ENCODE measurements at regions of chr6 and their contacts with region 1.

Region 1: DNA sequence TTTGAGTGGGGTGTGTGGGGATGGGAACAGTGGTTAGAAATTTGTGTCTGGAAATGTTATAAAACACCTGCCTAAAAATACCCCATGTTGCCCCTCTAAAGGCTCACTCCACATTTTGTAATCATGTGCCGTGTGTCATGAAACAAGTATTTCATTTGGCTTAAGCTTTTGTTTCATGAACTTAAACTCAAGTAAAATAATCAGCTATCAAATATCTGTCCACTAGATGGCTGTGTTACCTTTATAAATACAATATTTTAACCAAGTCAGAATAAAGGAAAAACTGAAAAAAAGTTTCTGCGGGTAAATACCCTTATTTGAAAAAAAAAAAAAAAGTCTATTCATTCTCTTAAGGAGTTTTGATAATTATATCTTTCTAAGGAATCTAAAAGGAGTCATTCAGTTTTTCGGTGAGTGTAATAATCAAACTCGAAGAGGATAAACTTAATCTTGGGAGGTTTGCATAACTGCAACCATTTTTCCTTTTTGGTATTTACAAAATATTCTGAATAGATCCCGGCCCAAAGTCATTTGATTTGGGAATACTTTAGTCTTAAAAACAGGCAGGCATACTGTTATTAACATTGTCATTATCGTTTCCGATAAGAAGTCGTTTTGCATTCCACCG is 29.9 kb upstream of the MTRF1L start:
- DNase-seq: no peak
- ATAC-seq: no peak
- H3K4me3 Mint-ChIP-seq: no peak overlapping the region
- H3K27ac Mint-ChIP-seq: no peak overlapping the region
- H3K4me1 Mint-ChIP-seq: peaks cover 28% of the 10 kb centered on the region
- H3K27me3 Mint-ChIP-seq: no peaks in the 10 kb centered on the region
- CTCF ChIP-seq: no peak

Region 2: DNA sequence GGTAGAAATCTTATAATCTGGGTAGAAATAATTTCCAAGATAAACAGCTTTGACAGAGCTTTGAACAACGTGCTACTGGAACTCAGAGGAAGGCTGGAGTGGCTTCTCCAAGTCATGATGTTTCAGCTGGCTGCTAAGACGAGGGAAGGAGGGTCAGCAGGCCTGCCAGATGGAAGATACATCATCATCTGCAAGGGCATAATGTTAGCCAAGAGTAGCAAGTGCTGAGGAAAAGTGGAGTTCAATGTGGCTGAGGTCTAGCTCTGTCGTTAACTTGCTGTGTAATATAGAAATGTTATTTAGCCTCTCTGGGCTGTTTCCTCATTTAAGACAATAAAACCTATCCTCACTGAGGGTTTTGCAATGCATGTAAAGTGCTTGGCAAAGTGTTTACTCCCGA is 63.7 kb after region 1 on chr6:
- CTCF ChIA-PET with region 1: no interaction called
- POLR2A ChIA-PET with region 1: no interaction called
- DNase-seq: no peak
- ATAC-seq: no peak
- H3K4me3 Mint-ChIP-seq: no peak overlapping the region
- H3K27ac Mint-ChIP-seq: peak overlapping the region; percentile 60; the same call in 1 of the 2 replicates
- H3K4me1 Mint-ChIP-seq: no peaks in the 10 kb centered on the region
- H3K27me3 Mint-ChIP-seq: no peaks in the 10 kb centered on the region
- CTCF ChIP-seq: no peak

Region 3: GRCh38 chr6:153108315-153108714 is 75.9 kb after region 1 on chr6:
- CTCF ChIA-PET with region 1: interaction called, 10 read pairs
- POLR2A ChIA-PET with region 1: no interaction called
- DNase-seq: no peak
- ATAC-seq: peak; percentile 62
- H3K4me3 Mint-ChIP-seq: no peak overlapping the region
- H3K27ac Mint-ChIP-seq: no peak overlapping the region
- H3K4me1 Mint-ChIP-seq: peaks cover 48% of the 10 kb centered on the region
- H3K27me3 Mint-ChIP-seq: no peaks in the 10 kb centered on the region
- CTCF ChIP-seq: no peak